Activated T-helper 2 cell treated with anti-CD3 and anti-CD28 coated beads, Interferon-gamma antibody, Interleukin-2, Interleukin-4, amounts not matched to agents 10 μg/mL and 5 μg/mL and 100 μg/mL, durations not matched to agents 14 hours and 24 hours and 36 hours (primary cell): ENCODE measurements at regions of chr17 and their contacts with region 1.

Region 1: DNA sequence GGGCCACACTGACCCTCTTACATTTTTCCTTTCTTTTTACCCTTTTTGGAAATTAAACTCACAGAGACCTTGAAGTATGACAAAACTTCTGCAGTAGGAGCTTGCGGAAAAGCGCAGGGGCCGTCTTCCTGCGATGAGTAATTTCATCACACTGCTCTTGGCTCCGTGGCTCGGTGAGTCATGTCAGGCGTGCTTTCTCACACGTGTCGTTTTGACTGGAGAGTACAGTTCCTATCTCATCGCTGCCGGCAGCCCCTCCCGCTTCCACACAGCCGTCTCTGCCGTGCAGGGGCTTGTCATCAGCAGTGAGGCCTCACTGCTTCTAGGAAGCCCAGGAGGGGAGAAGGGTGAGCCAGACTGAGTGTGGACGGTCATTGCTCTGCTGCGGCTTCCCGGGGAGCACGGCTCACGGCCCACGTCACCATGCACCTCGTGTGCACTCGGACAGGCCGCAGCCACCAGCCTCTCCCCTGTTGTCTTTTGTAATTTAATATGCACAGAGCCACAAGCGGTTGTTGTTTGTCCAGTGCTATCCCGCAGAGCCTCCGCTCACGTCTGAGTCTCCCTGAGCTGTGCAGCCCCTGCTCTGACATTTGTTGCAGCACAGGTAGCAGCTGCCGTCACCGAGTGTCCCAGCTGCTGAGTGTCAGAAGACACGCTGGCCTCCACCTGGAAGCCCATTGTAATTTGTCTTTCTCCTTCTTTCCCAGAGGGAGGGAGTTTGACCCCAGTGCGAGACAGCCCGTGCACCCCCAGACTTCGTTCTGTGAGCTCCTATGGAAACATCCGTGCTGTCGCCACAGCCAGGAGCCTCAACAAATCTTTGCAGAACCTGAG is 99.4 kb upstream of the CHMP6 start:
- DNase-seq: peak; percentile 84
- H3K4me3 Mint-ChIP-seq: peak overlapping the region; percentile 74
- H3K27ac Mint-ChIP-seq: peak overlapping the region; percentile 89
- H3K4me1 Mint-ChIP-seq: peaks cover 66% of the 10 kb centered on the region
- H3K27me3 Mint-ChIP-seq: no peaks in the 10 kb centered on the region

Region 2: GRCh38 chr17:80605326-80606066 is 286.7 kb before region 1 on chr17:
- intact Hi-C with region 1: loop called (anchors 5 kb)
- DNase-seq: peak; percentile 39
- H3K4me3 Mint-ChIP-seq: no peak overlapping the region
- H3K27ac Mint-ChIP-seq: peak overlapping the region; percentile 74
- H3K4me1 Mint-ChIP-seq: peaks cover 57% of the 10 kb centered on the region
- H3K27me3 Mint-ChIP-seq: no peaks in the 10 kb centered on the region

Region 3: GRCh38 chr17:80761110-80761871 is 130.9 kb before region 1 on chr17:
- intact Hi-C with region 1: loop called (anchors 1 kb)
- DNase-seq: peak; percentile 73
- H3K4me3 Mint-ChIP-seq: peak overlapping the region; percentile 66
- H3K27ac Mint-ChIP-seq: peak overlapping the region; percentile 99
- H3K4me1 Mint-ChIP-seq: peaks cover 72% of the 10 kb centered on the region
- H3K27me3 Mint-ChIP-seq: no peaks in the 10 kb centered on the region

Region 4: DNA sequence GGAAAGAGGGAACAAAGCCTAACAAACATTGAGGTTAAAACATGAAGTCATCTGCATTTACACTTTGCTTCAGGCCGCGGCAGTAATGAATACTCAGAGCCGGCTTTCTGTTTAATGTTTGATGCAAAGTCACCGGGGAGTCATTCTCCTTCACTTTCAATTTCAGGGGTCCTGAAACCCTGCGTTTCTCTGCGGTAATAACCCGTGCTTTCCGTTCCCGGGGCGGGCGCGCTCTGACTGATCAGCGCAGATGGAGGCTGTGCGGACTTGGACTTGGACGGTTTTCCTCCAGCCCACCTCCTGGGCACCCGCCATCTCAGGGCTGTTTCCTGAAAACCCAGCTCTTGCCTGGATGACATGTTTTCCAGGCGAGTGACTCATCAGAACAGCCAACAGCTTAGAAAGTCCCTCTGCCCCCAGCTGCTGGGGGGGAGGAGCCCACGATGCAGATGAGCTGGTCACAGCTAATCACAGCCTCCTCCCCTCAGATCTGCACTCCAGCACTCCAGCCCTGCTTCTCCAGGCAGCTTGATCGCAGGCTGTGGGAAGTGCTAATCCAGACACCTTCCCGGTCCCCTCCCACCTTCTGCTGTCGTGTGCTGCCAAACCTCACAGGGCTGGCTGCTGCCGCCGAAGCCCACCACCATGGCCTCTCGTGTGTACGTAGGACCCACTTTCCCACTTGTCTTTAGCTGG is 59.2 kb before region 1 on chr17:
- intact Hi-C with region 1: loop called (anchors 1 kb)
- DNase-seq: peak; percentile 83
- H3K4me3 Mint-ChIP-seq: peak overlapping the region; percentile 77
- H3K27ac Mint-ChIP-seq: peak overlapping the region; percentile 94
- H3K4me1 Mint-ChIP-seq: peaks cover 47% of the 10 kb centered on the region
- H3K27me3 Mint-ChIP-seq: no peaks in the 10 kb centered on the region

Region 5: GRCh38 chr17:80876950-80877728 is 15.1 kb before region 1 on chr17:
- intact Hi-C with region 1: loop called (anchors 1 kb)
- DNase-seq: peak; percentile 67
- H3K4me3 Mint-ChIP-seq: peak overlapping the region; percentile 67
- H3K27ac Mint-ChIP-seq: peak overlapping the region; percentile 88
- H3K4me1 Mint-ChIP-seq: peaks cover 54% of the 10 kb centered on the region
- H3K27me3 Mint-ChIP-seq: no peaks in the 10 kb centered on the region